Mammary epithelial cell (primary cell): ENCODE measurements at regions of chr16 and their contacts with region 1.

Region 1: GRCh38 chr16:56608043-56608875 is at the start of gene MT2A:
- DNase-seq: peak; percentile 97
- H3K4me3 ChIP-seq: peak within 1 kb of the TSS; percentile 45 to 81 (median 59)
- H3K27ac ChIP-seq: peak within 1 kb of the TSS; percentile 95
- H3K4me1 ChIP-seq: peaks cover 59% of the 10 kb centered on the region
- H3K27me3 ChIP-seq: no peaks in the 10 kb centered on the region
- CTCF ChIP-seq: no peak
- total RNA-seq, gene MT2A: 295 to 3,844 TPM

Region 2: GRCh38 chr16:56519459-56520250 is 88.6 kb before region 1 on chr16 and contains the start of gene BBS2:
- CTCF ChIA-PET with region 1: no interaction called
- dilution Hi-C with region 1: no loop called
- in situ Hi-C with region 1: loop called in 1 of 2 experiments (anchors 10 kb)
- intact Hi-C with region 1: no loop called
- DNase-seq: peak; percentile 89
- H3K4me3 ChIP-seq: peak within 1 kb of the TSS; percentile 92 to 97 (median 95)
- H3K27ac ChIP-seq: peak within 1 kb of the TSS; percentile 80
- H3K4me1 ChIP-seq: peaks cover 42% of the 10 kb centered on the region
- H3K27me3 ChIP-seq: no peaks in the 10 kb centered on the region
- CTCF ChIP-seq: peak in 1 of 2 donors; percentile 1
- total RNA-seq, gene BBS2: 46.5 to 60.0 TPM

Region 3: GRCh38 chr16:56625140-56625942 is 17.1 kb after region 1 on chr16 and contains the start of gene MT1E:
- CTCF ChIA-PET with region 1: interaction called, 3 read pairs
- dilution Hi-C with region 1: no loop called
- in situ Hi-C with region 1: no loop called
- intact Hi-C with region 1: loop called (anchors 1 kb)
- DNase-seq: peak; percentile 74
- H3K4me3 ChIP-seq: peak within 1 kb of the TSS; percentile 56 to 70 (median 63)
- H3K27ac ChIP-seq: peak within 1 kb of the TSS; percentile 44
- H3K4me1 ChIP-seq: peaks cover 6% of the 10 kb centered on the region
- H3K27me3 ChIP-seq: no peaks in the 10 kb centered on the region
- CTCF ChIP-seq: no peak
- total RNA-seq, gene MT1E: 259 to 468 TPM

Region 4: GRCh38 chr16:56649820-56650219 is 41.6 kb after region 1 on chr16:
- CTCF ChIA-PET with region 1: no interaction called
- dilution Hi-C with region 1: loop called (anchors 5 kb)
- in situ Hi-C with region 1: no loop called
- intact Hi-C with region 1: no loop called
- DNase-seq: peak; percentile 89
- H3K4me3 ChIP-seq: no peak overlapping the region
- H3K27ac ChIP-seq: peak overlapping the region; percentile 36
- H3K4me1 ChIP-seq: peaks cover 17% of the 10 kb centered on the region
- H3K27me3 ChIP-seq: no peaks in the 10 kb centered on the region
- CTCF ChIP-seq: no peak

Region 5: GRCh38 chr16:56691885-56692284 is 83.6 kb after region 1 on chr16:
- CTCF ChIA-PET with region 1: no interaction called
- dilution Hi-C with region 1: no loop called
- in situ Hi-C with region 1: no loop called
- intact Hi-C with region 1: loop called (anchors 2 kb)
- DNase-seq: peak; percentile 98
- H3K4me3 ChIP-seq: no peak overlapping the region
- H3K27ac ChIP-seq: peak overlapping the region; percentile 18
- H3K4me1 ChIP-seq: peaks cover 24% of the 10 kb centered on the region
- H3K27me3 ChIP-seq: no peaks in the 10 kb centered on the region
- CTCF ChIP-seq: no peak

Region 6: GRCh38 chr16:56931892-56932720 is 323.8 kb after region 1 on chr16 and contains the start of gene HERPUD1:
- CTCF ChIA-PET with region 1: no interaction called
- dilution Hi-C with region 1: no loop called
- in situ Hi-C with region 1: no loop called
- intact Hi-C with region 1: loop called (anchors 10 kb)
- DNase-seq: peak; percentile 97
- H3K4me3 ChIP-seq: peak within 1 kb of the TSS; percentile 81 to 90 (median 85)
- H3K27ac ChIP-seq: peak within 1 kb of the TSS; percentile 91
- H3K4me1 ChIP-seq: peaks cover 17% of the 10 kb centered on the region
- H3K27me3 ChIP-seq: no peaks in the 10 kb centered on the region
- CTCF ChIP-seq: peak in 1 of 2 donors; percentile 16
- total RNA-seq, gene HERPUD1: 166 to 239 TPM